ENCODE measurements at regions of chr10 and their contacts with region 1.

Region 1: DNA sequence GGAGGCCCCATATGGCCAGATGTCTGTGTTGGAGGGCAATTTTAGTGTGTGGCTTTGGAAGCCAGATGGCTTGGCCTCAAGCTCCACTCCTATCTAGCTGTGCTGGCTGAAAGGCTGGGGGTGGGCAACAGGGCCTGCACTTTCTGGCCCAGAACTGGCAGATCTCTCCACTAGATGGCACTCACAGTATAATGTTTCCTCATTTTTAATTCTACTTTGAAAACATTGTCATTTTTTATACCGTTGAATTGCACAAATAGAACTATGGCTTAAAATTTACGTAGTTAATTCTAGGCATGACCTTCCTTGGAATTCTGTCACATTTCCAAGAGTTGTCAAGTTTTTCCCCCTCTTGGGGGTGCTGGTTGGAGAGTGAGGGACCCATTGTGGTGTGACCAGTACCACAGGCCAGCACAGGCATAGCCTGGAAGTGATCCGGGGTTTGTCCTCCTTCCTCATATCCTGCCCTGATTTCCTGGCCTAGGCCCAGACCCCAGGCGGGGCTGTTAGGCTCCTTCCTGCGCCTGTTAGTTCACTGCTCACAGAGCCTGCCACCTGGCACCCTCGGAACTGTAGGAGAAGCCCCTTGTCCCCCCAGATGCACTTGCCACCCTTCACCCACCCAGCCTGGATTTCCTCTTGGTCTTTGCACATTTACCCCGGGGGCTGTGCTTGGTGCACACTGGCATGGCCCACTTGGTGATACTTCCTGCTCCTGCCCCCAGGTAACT is 52.8 kb downstream of the ARHGAP22 start:
- DNase-seq: peak in 1 of 2 experiments; percentile 63
- H3K4me3 ChIP-seq: no peak overlapping the region
- H3K27ac ChIP-seq: no peak overlapping the region
- H3K4me1 ChIP-seq: peaks cover 0 to 8% (median 4%) of the 10 kb centered on the region in 4 experiments; a peak in 4 of 7 replicates
- H3K27me3 ChIP-seq: no peaks in the 10 kb centered on the region; a peak in 1 of 7 replicates
- CTCF ChIP-seq: peak; percentile 45 to 70 (median 68)
- EP300 ChIP-seq: no peak
- POLR2A ChIP-seq: no peak
- RAD21 ChIP-seq: peak; percentile 69 to 72

Region 2: GRCh38 chr10:48523820-48524758 is 27.9 kb before region 1 on chr10:
- CTCF ChIA-PET with region 1: interaction called, 22 read pairs
- POLR2A ChIA-PET with region 1: interaction called, 4 read pairs
- DNase-seq: peak in 1 of 2 experiments; percentile 83
- H3K4me3 ChIP-seq: peak overlapping the region; percentile 54 to 78 (median 73)
- H3K27ac ChIP-seq: no peak overlapping the region
- H3K4me1 ChIP-seq: peaks cover 2 to 16% (median 3%) of the 10 kb centered on the region in 4 experiments; a peak in 6 of 7 replicates
- H3K27me3 ChIP-seq: peaks cover 0 to 2% (median 0%) of the 10 kb centered on the region in 4 experiments; a peak in 1 of 7 replicates
- CTCF ChIP-seq: peak; percentile 56 to 82 (median 71)
- EP300 ChIP-seq: no peak; a peak in 1 of 3 replicates
- POLR2A ChIP-seq: no peak
- RAD21 ChIP-seq: peak; percentile 41 to 73; a peak in 3 of 4 replicates

Region 3: GRCh38 chr10:48541144-48541795 is 10.8 kb before region 1 on chr10:
- CTCF ChIA-PET with region 1: interaction called, 127 read pairs
- POLR2A ChIA-PET with region 1: no interaction called
- DNase-seq: peak in 1 of 2 experiments; percentile 30
- H3K4me3 ChIP-seq: no peak overlapping the region
- H3K27ac ChIP-seq: no peak overlapping the region
- H3K4me1 ChIP-seq: peaks cover 0 to 28% (median 17%) of the 10 kb centered on the region in 4 experiments; a peak in 6 of 7 replicates
- H3K27me3 ChIP-seq: no peaks in the 10 kb centered on the region
- CTCF ChIP-seq: no peak
- EP300 ChIP-seq: no peak
- POLR2A ChIP-seq: no peak
- RAD21 ChIP-seq: no peak

Region 4: DNA sequence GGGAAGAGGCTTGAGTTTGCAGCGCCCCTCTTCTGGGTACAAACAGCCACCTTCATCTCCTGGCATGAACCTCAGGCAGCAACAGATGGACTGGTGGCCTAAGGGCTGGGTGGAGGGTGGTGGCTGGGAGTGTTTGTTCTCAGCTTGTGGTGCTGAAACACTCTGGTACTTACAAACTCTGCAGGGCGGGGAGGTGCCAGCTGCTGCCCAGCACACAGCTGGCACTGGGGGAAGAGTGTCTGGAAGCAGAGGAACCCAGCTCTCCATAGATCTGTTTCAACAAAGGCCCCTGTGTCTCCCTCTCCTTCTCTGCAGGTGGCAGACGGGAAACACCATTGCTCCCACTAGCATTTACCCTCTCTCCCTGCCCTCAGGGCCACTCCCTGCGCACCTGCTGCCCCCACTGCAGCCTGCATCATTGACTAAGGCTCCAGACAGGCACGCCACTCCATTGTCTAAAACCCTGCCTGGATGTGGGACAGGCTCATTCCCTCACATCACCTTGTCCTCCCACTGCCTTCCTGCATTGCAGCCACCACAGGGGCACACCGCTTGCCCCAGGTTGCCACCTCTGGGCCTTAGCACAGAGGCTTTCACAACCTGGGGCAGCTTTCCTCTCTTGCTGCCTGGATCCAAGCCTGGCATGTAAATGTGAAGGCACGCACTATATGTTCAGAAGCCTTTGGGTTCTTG is 46.4 kb after region 1 on chr10:
- CTCF ChIA-PET with region 1: interaction called, 15 read pairs
- POLR2A ChIA-PET with region 1: no interaction called
- DNase-seq: no peak
- H3K4me3 ChIP-seq: no peak overlapping the region
- H3K27ac ChIP-seq: no peak overlapping the region
- H3K4me1 ChIP-seq: peaks cover 2 to 17% (median 8%) of the 10 kb centered on the region in 4 experiments; a peak in 5 of 7 replicates
- H3K27me3 ChIP-seq: peaks cover 0 to under 1% (median 0%) of the 10 kb centered on the region in 4 experiments; a peak in 3 of 7 replicates
- CTCF ChIP-seq: no peak
- EP300 ChIP-seq: no peak
- POLR2A ChIP-seq: no peak
- RAD21 ChIP-seq: no peak

Region 5: GRCh38 chr10:48614481-48615390 is 62.7 kb after region 1 on chr10:
- CTCF ChIA-PET with region 1: interaction called, 14 read pairs
- POLR2A ChIA-PET with region 1: no interaction called
- DNase-seq: peak in 1 of 2 experiments; percentile 33
- H3K4me3 ChIP-seq: no peak overlapping the region
- H3K27ac ChIP-seq: no peak overlapping the region
- H3K4me1 ChIP-seq: no peaks in the 10 kb centered on the region
- H3K27me3 ChIP-seq: no peaks in the 10 kb centered on the region; a peak in 1 of 7 replicates
- CTCF ChIP-seq: peak in 1 of 3 experiments; percentile 29; a peak in 1 of 4 replicates
- EP300 ChIP-seq: no peak
- POLR2A ChIP-seq: no peak
- RAD21 ChIP-seq: peak in 1 of 2 experiments; percentile 9; a peak in 1 of 4 replicates